Activated CD4-positive, alpha-beta T cell treated with anti-CD3 and anti-CD28 coated beads for 36 hours (primary cell): ENCODE measurements at regions of chr2 and their contacts with region 1.

Region 1: DNA sequence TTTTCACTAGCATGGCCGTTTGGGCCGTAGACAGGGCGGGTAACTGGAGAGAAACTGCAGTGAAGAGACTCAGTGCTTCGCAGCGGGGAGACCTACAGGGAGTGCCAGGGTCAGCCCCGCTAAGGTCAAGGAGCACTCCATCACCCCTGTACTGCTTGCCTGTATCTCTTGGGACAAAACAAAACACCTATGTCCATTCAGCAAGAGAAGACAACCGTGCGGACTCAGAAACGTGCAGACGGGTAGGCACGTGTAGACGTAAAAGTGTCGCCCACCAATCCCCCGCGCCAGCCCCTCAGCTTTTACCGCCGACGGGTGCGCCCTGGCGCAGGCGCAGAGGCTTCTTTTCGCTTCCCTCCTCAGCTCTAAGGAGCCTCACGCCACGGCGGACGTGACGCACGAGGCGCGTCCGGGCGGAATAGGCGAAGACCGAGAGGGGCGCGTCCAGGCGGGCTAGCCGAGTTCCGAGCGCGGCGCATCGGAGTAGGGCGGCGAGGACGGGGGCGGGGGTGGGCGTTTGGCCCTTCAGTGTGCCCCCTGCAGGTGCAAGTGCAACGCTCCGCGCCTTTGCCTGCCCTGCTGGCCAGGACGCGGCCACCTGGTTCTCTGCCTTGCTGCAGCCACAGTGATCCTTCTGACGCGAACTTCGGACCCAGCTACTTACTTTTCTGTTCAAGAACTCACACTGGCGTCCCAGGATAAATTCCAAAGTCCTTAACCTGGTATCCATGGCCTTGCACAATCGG is 3.3 kb upstream of the SOS1 start:
- DNase-seq: peak; percentile 98
- ATAC-seq: peak; percentile 68
- H3K4me3 Mint-ChIP-seq: peak overlapping the region; percentile 83
- H3K27ac Mint-ChIP-seq: peak overlapping the region; percentile 87
- H3K4me1 Mint-ChIP-seq: peaks cover 45% of the 10 kb centered on the region
- H3K27me3 Mint-ChIP-seq: no peaks in the 10 kb centered on the region

Region 2: DNA sequence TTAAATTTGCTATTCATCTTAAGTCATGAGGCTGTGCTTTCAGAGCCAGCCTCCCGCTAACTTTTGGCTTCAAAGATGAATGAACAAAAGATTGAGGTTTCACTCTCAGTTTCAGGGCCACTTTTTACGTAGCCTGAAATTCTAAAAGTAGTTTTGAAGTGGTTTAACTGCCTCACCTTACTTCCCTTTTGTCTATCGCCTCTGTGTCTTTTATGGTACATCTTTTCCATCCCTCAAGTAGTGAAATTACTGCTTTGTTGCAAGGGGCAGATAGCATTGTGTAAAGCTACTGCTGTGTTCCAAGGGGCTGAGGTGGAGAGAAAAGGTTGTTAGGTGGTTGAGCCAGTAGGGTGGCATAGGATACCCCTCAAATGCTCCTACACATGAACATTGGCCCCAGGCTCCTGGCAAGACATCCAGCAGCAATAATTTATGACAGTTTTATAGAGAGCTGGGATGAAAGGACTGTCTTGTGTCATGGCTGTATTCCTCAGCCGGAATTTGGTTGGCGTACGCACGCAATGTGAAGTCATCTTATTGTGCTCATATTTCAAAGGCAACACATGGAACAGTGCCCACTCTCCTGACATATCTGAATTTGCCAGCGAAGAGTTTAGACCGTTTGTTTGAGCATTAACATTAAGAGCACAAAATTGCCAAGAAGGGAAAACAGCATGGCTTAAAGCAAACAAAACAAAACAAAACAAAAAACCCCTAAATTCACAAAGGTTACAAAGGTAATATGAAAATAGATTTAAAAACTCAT is 1747.6 kb before region 1 on chr2:
- CTCF ChIA-PET with region 1: no interaction called
- POLR2A ChIA-PET with region 1: no interaction called
- intact Hi-C with region 1: loop called in 1 of 2 experiments (anchors 5 kb)
- DNase-seq: peak; percentile 66
- ATAC-seq: peak; percentile 83
- H3K4me3 Mint-ChIP-seq: peak overlapping the region; percentile 44
- H3K27ac Mint-ChIP-seq: peak overlapping the region; percentile 83
- H3K4me1 Mint-ChIP-seq: peaks cover 34% of the 10 kb centered on the region
- H3K27me3 Mint-ChIP-seq: peaks cover 47% of the 10 kb centered on the region

Region 3: GRCh38 chr2:38653715-38654527 is 470.3 kb before region 1 on chr2:
- CTCF ChIA-PET with region 1: no interaction called
- POLR2A ChIA-PET with region 1: no interaction called
- intact Hi-C with region 1: loop called in 1 of 2 experiments (anchors 1 kb)
- DNase-seq: peak; percentile 87
- ATAC-seq: peak; percentile 81
- H3K4me3 Mint-ChIP-seq: peak overlapping the region; percentile 44
- H3K27ac Mint-ChIP-seq: peak overlapping the region; percentile 98
- H3K4me1 Mint-ChIP-seq: peaks cover 58% of the 10 kb centered on the region
- H3K27me3 Mint-ChIP-seq: no peaks in the 10 kb centered on the region

Region 4: GRCh38 chr2:38750891-38751595 is 373.1 kb before region 1 on chr2 and contains the start of gene SRSF7:
- CTCF ChIA-PET with region 1: no interaction called
- POLR2A ChIA-PET with region 1: interaction called, 4 read pairs
- intact Hi-C with region 1: loop called (anchors 2 to 10 kb)
- DNase-seq: peak; percentile 98
- ATAC-seq: peak; percentile 83
- H3K4me3 Mint-ChIP-seq: peak within 1 kb of the TSS; percentile 94
- H3K27ac Mint-ChIP-seq: peak within 1 kb of the TSS; percentile 100
- H3K4me1 Mint-ChIP-seq: peaks cover 51% of the 10 kb centered on the region
- H3K27me3 Mint-ChIP-seq: no peaks in the 10 kb centered on the region
- total RNA-seq, gene SRSF7: 194 to 309 TPM

Region 5: DNA sequence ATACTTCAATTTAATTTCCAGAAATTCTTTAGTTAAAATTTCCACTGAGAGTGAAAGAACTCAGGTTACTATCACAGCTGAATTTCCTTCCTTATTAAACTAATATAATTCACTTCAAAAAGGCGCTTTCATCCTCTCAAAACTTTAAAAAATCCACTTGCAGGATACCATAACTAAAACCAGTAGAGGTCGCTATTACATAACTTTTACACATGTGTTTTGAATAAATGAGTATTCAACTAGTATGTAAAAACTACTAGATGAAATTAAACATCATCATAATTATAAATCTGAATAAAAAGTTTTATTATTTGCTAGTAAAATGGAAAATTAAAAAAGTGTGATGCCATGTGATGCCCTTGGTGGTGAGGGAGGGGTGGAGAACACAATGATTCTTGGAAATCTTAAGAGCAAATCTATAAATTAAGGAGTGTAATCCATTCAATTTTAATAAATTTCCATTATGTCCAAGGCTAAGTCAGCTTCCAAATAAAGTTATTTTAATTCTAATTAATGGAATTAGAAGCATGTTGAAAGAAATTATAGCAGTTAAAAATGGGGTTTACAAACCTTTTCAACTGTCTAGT is 64.7 kb before region 1 on chr2:
- CTCF ChIA-PET with region 1: interaction called, 21 read pairs
- POLR2A ChIA-PET with region 1: no interaction called
- intact Hi-C with region 1: loop called (anchors 2 kb)
- DNase-seq: no peak
- ATAC-seq: peak; percentile 36
- H3K4me3 Mint-ChIP-seq: no peak overlapping the region
- H3K27ac Mint-ChIP-seq: no peak overlapping the region
- H3K4me1 Mint-ChIP-seq: no peaks in the 10 kb centered on the region
- H3K27me3 Mint-ChIP-seq: no peaks in the 10 kb centered on the region

Region 6: GRCh38 chr2:39216346-39217191 is 92.4 kb after region 1 on chr2:
- CTCF ChIA-PET with region 1: interaction called, 5 read pairs
- POLR2A ChIA-PET with region 1: interaction called, 5 read pairs
- intact Hi-C with region 1: loop called (anchors 1 kb)
- DNase-seq: peak; percentile 76
- ATAC-seq: peak; percentile 70
- H3K4me3 Mint-ChIP-seq: peak overlapping the region; percentile 45
- H3K27ac Mint-ChIP-seq: peak overlapping the region; percentile 88
- H3K4me1 Mint-ChIP-seq: peaks cover 44% of the 10 kb centered on the region
- H3K27me3 Mint-ChIP-seq: no peaks in the 10 kb centered on the region

Region 7: GRCh38 chr2:39492095-39492590 is 368.0 kb after region 1 on chr2:
- CTCF ChIA-PET with region 1: no interaction called
- POLR2A ChIA-PET with region 1: no interaction called
- intact Hi-C with region 1: loop called (anchors 1 to 5 kb)
- DNase-seq: peak; percentile 63
- ATAC-seq: peak; percentile 95
- H3K4me3 Mint-ChIP-seq: no peak overlapping the region
- H3K27ac Mint-ChIP-seq: peak overlapping the region; percentile 53
- H3K4me1 Mint-ChIP-seq: peaks cover 44% of the 10 kb centered on the region
- H3K27me3 Mint-ChIP-seq: peaks cover 9% of the 10 kb centered on the region